Left cardiac atrium (tissue), 4 donors: ENCODE measurements at regions of chr3 and their contacts with region 1.

Region 1: GRCh38 chr3:8441969-8442559 is 59.6 kb upstream of the LMCD1 start:
- DNase-seq: no peak
- ATAC-seq: peak; percentile 39 to 62

Region 2: GRCh38 chr3:8143186-8143585 is 298.9 kb before region 1 on chr3:
- intact Hi-C with region 1: no loop called
- DNase-seq: no peak
- ATAC-seq: no peak

Region 3: DNA sequence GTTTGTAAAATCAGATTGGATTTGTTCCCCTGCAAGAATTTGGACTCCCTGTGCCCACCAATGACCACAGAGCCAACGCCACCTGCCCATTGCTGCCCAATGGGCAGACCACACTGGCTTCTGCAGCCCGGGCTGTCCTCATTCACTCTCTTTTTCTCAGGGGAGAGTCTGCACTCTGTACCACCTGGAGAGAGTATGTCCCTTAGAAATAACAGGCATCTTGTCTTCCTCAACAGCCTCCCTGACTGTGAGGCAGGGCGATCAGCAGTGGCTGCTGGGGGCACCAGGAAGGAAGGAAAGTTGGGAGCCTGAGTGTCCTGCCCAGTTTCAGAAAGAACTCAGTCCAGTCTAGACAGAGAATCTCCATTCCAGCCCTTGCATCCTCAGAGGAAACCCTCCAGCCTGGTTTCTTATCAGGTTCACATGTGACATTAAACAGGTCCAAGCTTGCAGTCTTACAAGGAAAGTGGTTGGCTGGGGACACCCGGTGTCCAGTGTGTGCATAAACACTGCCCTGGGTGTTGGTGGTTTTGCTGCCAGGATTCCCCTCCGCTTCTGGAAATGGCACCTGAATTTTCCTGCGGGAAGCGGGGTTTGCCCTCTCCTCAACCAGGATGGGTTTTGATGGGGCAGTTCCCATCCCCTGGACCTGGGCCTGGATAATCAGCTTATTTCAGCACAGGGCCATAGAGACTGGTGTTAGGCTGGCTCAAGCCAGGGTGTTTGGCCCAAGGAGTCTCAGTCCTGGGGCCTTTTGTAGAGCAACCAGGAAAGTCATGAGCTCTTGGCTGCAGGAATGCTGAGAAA is 165.4 kb after region 1 on chr3:
- intact Hi-C with region 1: loop called (anchors 1 to 5 kb)
- DNase-seq: peak; percentile 73
- ATAC-seq: peak; percentile 96 to 99

Region 4: DNA sequence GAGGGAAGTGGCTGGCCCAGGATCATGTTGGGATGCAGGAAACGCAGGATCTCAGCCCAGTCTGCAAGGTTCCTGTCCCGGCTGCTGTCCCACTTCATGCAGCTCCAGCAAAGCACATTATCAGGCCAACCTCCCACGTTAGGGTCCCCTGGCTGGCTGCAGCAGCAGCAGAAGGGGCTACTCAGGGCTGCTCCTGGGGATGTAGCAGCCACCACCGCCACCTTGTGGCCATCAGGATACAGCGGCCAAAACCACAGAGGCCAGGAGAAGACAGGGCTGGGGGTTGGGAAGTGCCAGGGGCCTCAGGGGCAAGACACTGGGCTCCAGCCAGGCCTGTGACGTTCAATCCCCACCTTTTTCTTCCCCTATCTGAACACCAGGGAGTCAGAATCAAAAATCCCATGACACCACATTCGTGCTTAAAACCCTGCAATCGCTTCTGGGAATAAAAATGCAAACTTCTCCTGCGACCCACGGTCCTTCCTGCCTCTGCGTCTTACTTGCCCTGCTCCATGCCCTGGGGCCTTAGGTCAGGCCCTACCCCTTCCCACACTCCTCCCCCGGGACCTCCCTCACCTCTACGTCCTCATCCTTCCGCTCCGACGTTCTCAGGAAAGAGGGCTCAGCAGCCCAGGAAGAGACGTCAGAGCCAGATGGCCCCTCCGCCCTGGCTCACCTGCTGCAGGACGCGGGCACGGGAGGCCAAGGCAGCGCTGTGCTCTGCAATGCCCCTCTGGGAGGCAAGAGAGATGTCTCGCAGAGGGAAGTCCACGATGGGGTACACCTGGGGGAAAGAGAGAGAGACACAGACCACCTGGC is 181.0 kb after region 1 on chr3:
- intact Hi-C with region 1: loop called (anchors 5 kb)
- DNase-seq: peak; percentile 75
- ATAC-seq: peak; percentile 90 to 91